Adrenal gland (tissue), 19 donors: ENCODE measurements at regions of chr6 and their contacts with region 1.

Region 1: DNA sequence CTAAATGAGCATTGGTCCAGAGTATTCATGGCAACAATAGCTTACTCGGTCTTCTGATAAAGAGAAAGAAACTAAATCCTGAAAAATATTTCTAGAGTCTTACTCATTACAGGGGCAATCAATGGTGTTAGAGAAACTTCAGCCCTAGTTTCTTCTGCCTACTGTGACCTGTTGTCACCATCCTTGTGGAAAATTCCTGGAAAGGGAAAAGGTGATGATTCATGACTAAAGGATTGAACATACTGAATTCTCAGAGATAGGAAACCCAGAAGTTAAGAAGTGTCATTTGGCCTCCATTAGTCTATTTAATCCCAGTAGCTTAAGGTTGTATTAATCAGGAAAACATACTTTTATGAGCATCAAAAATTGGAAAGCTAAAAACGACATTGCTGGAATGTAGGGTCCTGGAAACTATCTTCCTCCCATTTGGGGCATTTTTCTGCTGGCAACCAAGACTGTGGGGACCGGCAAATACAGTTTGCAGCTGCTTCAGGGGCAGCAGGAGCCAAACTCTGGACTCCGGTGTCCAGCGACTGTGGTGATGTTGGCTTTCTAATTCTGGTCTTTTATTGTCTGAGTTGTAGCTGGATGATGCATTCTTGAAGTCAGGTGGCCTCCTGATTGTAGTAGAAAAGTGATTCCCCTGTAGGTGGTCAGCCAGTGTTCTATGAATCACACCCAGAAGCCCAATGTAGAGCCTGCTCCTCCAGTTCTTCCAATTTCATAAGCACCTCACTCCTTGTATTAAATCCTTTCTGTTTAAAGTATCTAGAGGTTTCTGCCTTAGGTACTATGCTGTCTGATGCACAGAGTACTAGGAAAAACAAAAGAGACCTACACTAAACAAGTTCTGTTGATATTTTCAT is 67.6 kb downstream of the LCA5 start:
- DNase-seq: no peak
- H3K4me3 ChIP-seq: no peak overlapping the region
- H3K27ac ChIP-seq: no peak overlapping the region
- H3K4me1 ChIP-seq: peaks cover 0 to 3% of the 10 kb centered on the region in 2 donors
- H3K27me3 ChIP-seq: no peaks in the 10 kb centered on the region
- CTCF ChIP-seq: no peak
- POLR2A ChIP-seq: no peak

Region 2: GRCh38 chr6:79078075-79079025 is 391.3 kb before region 1 on chr6 and contains the start of gene PHIP:
- intact Hi-C with region 1: loop called in 1 of 2 experiments (anchors 5 kb)
- DNase-seq: peak; percentile 94 to 97 (median 95)
- H3K4me3 ChIP-seq: peak within 1 kb of the TSS; percentile 61 to 96 (median 74)
- H3K27ac ChIP-seq: peak within 1 kb of the TSS; percentile 85 to 99 (median 96)
- H3K4me1 ChIP-seq: peaks cover 5 to 26% of the 10 kb centered on the region in 2 donors
- H3K27me3 ChIP-seq: no peaks in the 10 kb centered on the region
- CTCF ChIP-seq: no peak
- POLR2A ChIP-seq: peak; percentile 55 to 68
- total RNA-seq, gene PHIP: 8.0 to 24.1 (median 18.4) TPM